ENCODE measurements at regions of chr10 and their contacts with region 1.

Region 1: DNA sequence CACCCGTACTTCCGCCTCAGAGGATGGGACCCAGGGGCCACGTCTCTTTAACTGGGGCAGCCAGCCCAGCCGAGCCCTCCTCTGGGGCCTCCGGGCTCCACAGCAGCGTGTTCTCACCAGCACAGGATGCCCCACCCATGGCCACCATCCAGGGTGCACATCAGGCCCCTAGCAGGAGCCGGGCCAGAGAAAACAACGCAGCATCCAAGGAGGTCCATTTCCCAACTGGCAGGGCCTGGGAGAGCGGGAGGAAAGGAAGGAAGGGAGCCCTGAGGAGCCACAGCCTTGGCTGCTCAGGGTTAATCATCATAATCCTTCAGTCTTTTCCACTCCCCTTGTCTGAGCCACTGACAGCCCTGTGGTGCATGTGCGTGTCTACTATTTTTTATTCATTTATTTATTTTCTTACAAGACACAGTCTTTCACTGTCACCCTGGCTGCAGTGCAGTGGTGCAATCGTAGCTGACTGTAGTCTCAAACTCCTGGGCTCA is 3.6 kb downstream of the PLAC9 start:
- DNase-seq: peak; percentile 98 to 99 (median 98)
- ATAC-seq: peak; percentile 90 to 91
- H3K4me3 ChIP-seq: no peak overlapping the region
- H3K27ac ChIP-seq: peak overlapping the region; percentile 91
- H3K4me1 ChIP-seq: peaks cover 4% of the 10 kb centered on the region
- H3K27me3 ChIP-seq: no peaks in the 10 kb centered on the region

Region 2: DNA sequence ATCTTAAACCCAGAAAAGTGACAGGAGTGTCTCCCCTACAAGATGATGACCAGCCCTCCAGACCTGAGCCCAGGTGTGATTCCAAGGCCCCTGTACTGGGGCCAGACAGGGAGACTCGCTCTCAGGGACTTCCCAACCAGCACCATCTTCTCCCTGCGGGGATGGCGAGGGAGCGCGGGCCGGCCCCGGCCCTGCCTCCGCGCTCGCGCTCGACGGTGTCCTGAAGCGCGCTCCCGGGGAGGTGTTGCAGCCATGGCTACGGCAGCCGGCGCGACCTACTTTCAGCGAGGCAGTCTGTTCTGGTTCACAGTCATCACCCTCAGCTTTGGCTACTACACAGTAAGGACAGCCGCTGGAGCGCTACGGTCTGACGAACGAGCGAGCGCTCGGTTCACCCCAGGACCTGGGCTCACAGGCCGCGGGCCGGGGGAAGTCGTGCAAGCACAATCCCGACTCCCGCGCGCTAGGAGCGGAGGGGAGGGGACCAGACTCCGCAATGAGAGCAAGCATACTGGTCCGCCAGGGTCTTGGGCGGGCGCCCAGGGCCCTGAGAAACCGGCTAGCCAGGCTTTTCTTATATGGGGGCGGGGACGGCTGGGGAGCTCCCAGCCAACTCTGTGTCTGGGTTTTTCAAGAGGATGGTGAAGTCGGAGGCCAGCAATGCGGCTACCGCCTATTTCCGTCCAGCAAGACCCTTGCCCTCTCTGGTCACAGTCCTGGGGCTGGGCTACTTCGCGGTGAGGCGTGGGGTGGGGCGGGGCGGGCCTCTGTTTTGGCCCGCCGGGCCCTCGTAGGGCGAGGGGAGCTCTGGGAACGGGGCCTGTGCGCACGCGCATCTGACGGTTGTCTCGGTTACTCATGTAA is 57.4 kb before region 1 on chr10 and contains the start of gene TMEM254:
- intact Hi-C with region 1: loop called in 3 of 4 experiments (anchors 5 to 10 kb)
- DNase-seq: peak; percentile 95 to 98 (median 98)
- ATAC-seq: peak; percentile 98
- H3K4me3 ChIP-seq: peak within 1 kb of the TSS; percentile 91
- H3K27ac ChIP-seq: peak within 1 kb of the TSS; percentile 98
- H3K4me1 ChIP-seq: no peaks in the 10 kb centered on the region
- H3K27me3 ChIP-seq: no peaks in the 10 kb centered on the region
- total RNA-seq, gene TMEM254: 4.7 to 9.0 (median 8.3) TPM